ENCODE measurements at regions of chr12 and their contacts with region 1.

Region 1: DNA sequence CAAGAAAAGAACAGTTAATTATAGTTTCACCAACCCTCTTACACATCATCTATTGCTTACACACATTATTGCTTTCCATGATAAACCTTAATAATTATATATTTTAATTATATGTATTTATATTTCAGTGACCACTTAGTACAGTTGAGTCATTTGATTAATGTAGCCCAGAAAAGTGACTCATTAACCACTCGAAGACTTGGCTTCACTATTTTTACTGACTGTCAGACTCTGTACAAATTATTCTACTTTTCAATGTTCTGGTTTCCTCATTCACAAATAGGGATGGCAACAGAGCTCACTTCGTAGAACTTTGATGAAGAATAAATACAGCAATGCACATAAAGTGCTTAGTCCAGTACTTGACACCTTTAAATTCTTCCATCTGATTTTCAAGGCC is 98.3 kb downstream of the CFAP54 start:
- DNase-seq: no peak
- ATAC-seq: no peak
- H3K4me3 ChIP-seq: no peak overlapping the region
- H3K27ac ChIP-seq: no peak overlapping the region
- H3K4me1 ChIP-seq: no peaks in the 10 kb centered on the region
- H3K27me3 ChIP-seq: no peaks in the 10 kb centered on the region
- CTCF ChIP-seq: no peak

Region 2: GRCh38 chr12:96985480-96986362 is 398.0 kb after region 1 on chr12:
- intact Hi-C with region 1: loop called in 1 of 2 experiments (anchors 10 kb)
- DNase-seq: peak in 2 of 4 donors; percentile 42 to 83
- ATAC-seq: peak; percentile 95
- H3K4me3 ChIP-seq: peak overlapping the region; percentile 15 to 32
- H3K27ac ChIP-seq: no peak overlapping the region
- H3K4me1 ChIP-seq: peaks cover 0 to 9% of the 10 kb centered on the region in 2 donors
- H3K27me3 ChIP-seq: peaks cover 14 to 35% of the 10 kb centered on the region in 2 donors
- CTCF ChIP-seq: peak; percentile 78 to 95

Measured in left lung (tissue), 14 donors.